ENCODE measurements at regions of chr2 and their contacts with region 1.

Region 1: GRCh38 chr2:147149589-147150245 is 695.1 kb upstream of the ACVR2A start:
- DNase-seq: no peak
- H3K4me3 Mint-ChIP-seq: no peak overlapping the region
- H3K27ac Mint-ChIP-seq: no peak overlapping the region
- H3K4me1 Mint-ChIP-seq: no peaks in the 10 kb centered on the region
- H3K27me3 Mint-ChIP-seq: no peaks in the 10 kb centered on the region

Region 2: DNA sequence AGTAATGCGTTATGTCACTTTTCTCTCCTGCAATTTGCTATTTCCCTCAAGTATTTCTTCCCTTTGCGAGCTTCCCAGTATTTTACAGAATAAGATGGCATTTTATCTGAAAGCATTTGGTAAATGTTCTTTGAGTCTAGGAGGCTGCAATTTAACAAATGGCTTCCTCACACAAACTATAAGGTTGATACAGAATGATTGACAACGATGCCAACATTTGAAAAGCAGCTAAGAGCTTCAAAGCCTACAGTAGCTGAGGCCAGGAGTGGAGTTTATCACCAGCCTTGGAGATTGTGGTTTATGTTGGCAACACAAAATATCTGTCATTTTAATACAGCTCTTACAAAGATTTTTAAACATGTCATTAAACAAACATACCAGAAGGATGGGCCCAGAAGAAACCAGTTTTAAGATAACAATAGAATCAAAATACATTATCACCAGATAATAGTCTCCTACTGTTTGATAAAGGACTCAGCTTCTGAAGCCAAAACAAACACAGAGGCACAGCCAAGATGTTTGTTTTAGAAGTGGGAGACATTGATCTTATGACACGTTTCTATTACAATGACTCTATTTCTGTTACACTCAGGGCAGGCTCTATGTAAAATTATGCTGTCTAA is 16.3 kb before region 1 on chr2:
- intact Hi-C with region 1: no loop called
- DNase-seq: no peak
- H3K4me3 Mint-ChIP-seq: no peak overlapping the region
- H3K27ac Mint-ChIP-seq: no peak overlapping the region
- H3K4me1 Mint-ChIP-seq: no peaks in the 10 kb centered on the region
- H3K27me3 Mint-ChIP-seq: peaks cover 7% of the 10 kb centered on the region

Region 3: GRCh38 chr2:147165697-147166382 is 16.1 kb after region 1 on chr2:
- intact Hi-C with region 1: no loop called
- DNase-seq: no peak
- H3K4me3 Mint-ChIP-seq: no peak overlapping the region
- H3K27ac Mint-ChIP-seq: no peak overlapping the region
- H3K4me1 Mint-ChIP-seq: no peaks in the 10 kb centered on the region
- H3K27me3 Mint-ChIP-seq: peaks cover 7% of the 10 kb centered on the region

Region 4: GRCh38 chr2:147182260-147182659 is 32.5 kb after region 1 on chr2:
- intact Hi-C with region 1: no loop called
- DNase-seq: peak; percentile 67
- H3K4me3 Mint-ChIP-seq: peak overlapping the region; percentile 40
- H3K27ac Mint-ChIP-seq: peak overlapping the region; percentile 86
- H3K4me1 Mint-ChIP-seq: peaks cover 32% of the 10 kb centered on the region
- H3K27me3 Mint-ChIP-seq: peaks cover 5% of the 10 kb centered on the region

Region 5: GRCh38 chr2:147578529-147578928 is 428.8 kb after region 1 on chr2:
- intact Hi-C with region 1: no loop called
- DNase-seq: no peak
- H3K4me3 Mint-ChIP-seq: no peak overlapping the region
- H3K27ac Mint-ChIP-seq: no peak overlapping the region
- H3K4me1 Mint-ChIP-seq: no peaks in the 10 kb centered on the region
- H3K27me3 Mint-ChIP-seq: peaks cover 2% of the 10 kb centered on the region

Region 6: DNA sequence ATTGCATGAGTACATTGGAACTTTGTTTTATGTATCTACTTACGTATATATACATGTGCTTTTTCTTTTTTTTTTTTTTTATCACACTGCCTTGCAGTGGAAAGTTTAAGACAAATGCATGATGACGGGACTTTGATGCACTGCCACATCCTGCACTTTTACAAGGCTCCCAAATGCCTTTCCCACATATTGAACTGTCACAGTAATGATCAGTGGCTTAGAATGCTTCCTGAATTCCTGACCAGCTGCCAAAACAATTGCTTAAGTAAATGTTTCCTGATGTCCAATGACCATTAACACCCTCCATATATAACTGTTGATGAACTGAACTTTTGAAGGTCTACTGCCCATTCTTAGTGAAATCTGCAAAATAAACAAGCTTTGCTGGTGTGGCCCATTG is 1949.0 kb after region 1 on chr2:
- intact Hi-C with region 1: loop called (anchors 10 kb)
- DNase-seq: no peak
- H3K4me3 Mint-ChIP-seq: no peak overlapping the region
- H3K27ac Mint-ChIP-seq: no peak overlapping the region
- H3K4me1 Mint-ChIP-seq: no peaks in the 10 kb centered on the region
- H3K27me3 Mint-ChIP-seq: peaks cover 7% of the 10 kb centered on the region